CD8-positive, alpha-beta T cell (primary cell): ENCODE measurements at regions of chr11 and their contacts with region 1.

Region 1: DNA sequence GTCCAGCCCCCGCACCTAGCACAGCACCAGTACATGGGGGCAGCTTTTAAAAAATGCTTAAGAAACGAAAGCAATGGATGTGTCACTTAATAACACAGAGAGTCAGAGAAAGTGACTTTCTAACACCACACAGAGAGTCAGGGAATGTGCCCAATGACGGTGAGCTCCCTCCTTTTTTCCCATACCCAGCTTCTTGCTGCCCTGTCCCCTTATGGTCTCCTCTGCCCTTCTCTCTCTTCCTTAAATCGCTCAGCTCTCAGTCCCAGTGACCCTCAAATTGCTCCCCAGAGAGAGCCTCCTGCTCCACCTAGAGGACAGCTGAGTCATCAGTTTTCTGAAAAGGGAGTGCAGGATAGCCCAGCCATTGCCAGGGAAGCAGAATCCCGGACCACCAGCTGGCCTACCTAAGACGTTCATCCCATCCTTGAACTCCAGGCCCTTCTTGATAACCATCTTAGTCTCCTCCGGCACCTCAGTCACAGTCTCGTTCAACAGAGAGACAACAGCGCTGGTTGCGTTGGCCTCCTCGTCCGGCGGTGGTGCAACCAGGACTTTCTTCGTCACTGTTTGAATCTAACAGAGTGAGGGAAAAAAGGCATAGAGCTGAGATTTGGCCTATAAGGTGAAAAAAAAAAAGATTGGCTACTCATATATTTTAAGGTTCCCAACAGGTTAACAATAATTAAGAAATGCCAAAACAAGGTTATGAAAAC is 113.5 kb downstream of the SLC1A2 start:
- DNase-seq: peak; percentile 18 to 76 (median 53)
- ATAC-seq: peak; percentile 73
- H3K4me3 ChIP-seq: peak overlapping the region; percentile 12 to 39
- H3K4me3 Mint-ChIP-seq: peak overlapping the region; percentile 79
- H3K27ac ChIP-seq: peak overlapping the region in 1 of 2 experiments; percentile 29
- H3K27ac Mint-ChIP-seq: peak overlapping the region; percentile 92
- H3K4me1 ChIP-seq: peaks cover 18% of the 10 kb centered on the region
- H3K4me1 Mint-ChIP-seq: peaks cover 16% of the 10 kb centered on the region
- H3K27me3 ChIP-seq: no peaks in the 10 kb centered on the region
- H3K27me3 Mint-ChIP-seq: no peaks in the 10 kb centered on the region
- CTCF ChIP-seq: peak; percentile 63

Region 2: DNA sequence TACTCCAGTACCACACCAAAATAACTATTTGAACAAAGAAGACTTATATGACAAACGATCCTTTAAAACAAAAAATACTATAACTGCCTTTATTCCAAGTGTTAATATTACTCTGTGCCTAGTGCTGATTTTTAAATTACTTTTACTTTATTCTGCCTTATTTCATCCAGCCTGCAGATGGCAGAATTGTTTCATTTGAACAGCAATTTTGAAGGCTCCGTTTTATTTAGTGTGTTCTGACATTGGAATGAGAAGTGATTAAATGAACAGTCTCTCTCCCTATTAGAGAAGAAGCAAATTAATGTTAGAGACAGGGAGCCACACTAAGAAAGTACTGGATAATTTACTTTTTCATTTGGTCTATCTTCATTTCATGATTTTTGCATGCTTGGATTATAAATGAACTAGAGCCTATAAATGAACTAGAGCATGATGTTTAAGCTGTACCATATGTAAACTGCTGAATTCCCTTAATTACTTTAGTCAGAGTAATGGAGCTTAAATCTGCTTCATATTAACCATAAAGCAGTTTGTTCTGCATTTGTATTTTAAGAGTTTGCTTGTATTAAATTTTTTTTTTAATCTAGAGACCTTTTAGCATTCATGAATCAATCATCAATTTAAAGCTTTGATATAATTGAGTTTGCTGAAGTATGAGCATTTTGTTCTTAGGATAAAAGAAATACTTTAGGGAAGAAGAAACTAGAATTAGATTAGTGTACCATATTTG is 379.6 kb before region 1 on chr11:
- CTCF ChIA-PET with region 1: interaction called, 86 read pairs
- POLR2A ChIA-PET with region 1: interaction called, 3 read pairs
- intact Hi-C with region 1: loop called (anchors 1 to 2 kb)
- DNase-seq: peak in 3 of 9 experiments; percentile 12 to 73 (median 63)
- ATAC-seq: peak; percentile 71
- H3K4me3 ChIP-seq: no peak overlapping the region
- H3K4me3 Mint-ChIP-seq: no peak overlapping the region
- H3K27ac ChIP-seq: no peak overlapping the region
- H3K27ac Mint-ChIP-seq: no peak overlapping the region
- H3K4me1 ChIP-seq: peaks cover 3% of the 10 kb centered on the region
- H3K4me1 Mint-ChIP-seq: peaks cover 29% of the 10 kb centered on the region
- H3K27me3 ChIP-seq: no peaks in the 10 kb centered on the region
- H3K27me3 Mint-ChIP-seq: no peaks in the 10 kb centered on the region
- CTCF ChIP-seq: peak; percentile 96

Region 3: GRCh38 chr11:35138943-35139721 is 166.7 kb before region 1 on chr11 and contains the start of gene CD44:
- CTCF ChIA-PET with region 1: interaction called, 24 read pairs
- POLR2A ChIA-PET with region 1: interaction called, 3 read pairs
- intact Hi-C with region 1: loop called in 1 of 2 experiments (anchors 5 kb)
- DNase-seq: peak; percentile 67 to 93 (median 85)
- ATAC-seq: peak; percentile 83
- H3K4me3 ChIP-seq: peak within 1 kb of the TSS; percentile 80 to 97
- H3K4me3 Mint-ChIP-seq: peak within 1 kb of the TSS; percentile 90
- H3K27ac ChIP-seq: peak within 1 kb of the TSS; percentile 82 to 98
- H3K27ac Mint-ChIP-seq: peak within 1 kb of the TSS; percentile 98
- H3K4me1 ChIP-seq: peaks cover 35% of the 10 kb centered on the region
- H3K4me1 Mint-ChIP-seq: peaks cover 47% of the 10 kb centered on the region
- H3K27me3 ChIP-seq: no peaks in the 10 kb centered on the region
- H3K27me3 Mint-ChIP-seq: no peaks in the 10 kb centered on the region
- CTCF ChIP-seq: no peak
- total RNA-seq, gene CD44: 1,070 to 1,104 TPM

Region 4: GRCh38 chr11:35182317-35182939 is 123.4 kb before region 1 on chr11:
- CTCF ChIA-PET with region 1: interaction called, 19 read pairs
- POLR2A ChIA-PET with region 1: interaction called, 4 read pairs
- intact Hi-C with region 1: loop called in 1 of 2 experiments (anchors 5 kb)
- DNase-seq: peak in 1 of 9 experiments; percentile 24
- ATAC-seq: no peak
- H3K4me3 ChIP-seq: no peak overlapping the region
- H3K4me3 Mint-ChIP-seq: peak overlapping the region; percentile 24
- H3K27ac ChIP-seq: peak overlapping the region in 1 of 2 experiments; percentile 9
- H3K27ac Mint-ChIP-seq: peak overlapping the region; percentile 89
- H3K4me1 ChIP-seq: peaks cover 80% of the 10 kb centered on the region
- H3K4me1 Mint-ChIP-seq: peaks cover 86% of the 10 kb centered on the region
- H3K27me3 ChIP-seq: no peaks in the 10 kb centered on the region
- H3K27me3 Mint-ChIP-seq: no peaks in the 10 kb centered on the region
- CTCF ChIP-seq: no peak

Region 5: GRCh38 chr11:35227576-35228327 is 78.1 kb before region 1 on chr11:
- CTCF ChIA-PET with region 1: interaction called, 5 read pairs
- POLR2A ChIA-PET with region 1: no interaction called
- intact Hi-C with region 1: loop called in 1 of 2 experiments (anchors 5 kb)
- DNase-seq: no peak
- ATAC-seq: no peak
- H3K4me3 ChIP-seq: no peak overlapping the region
- H3K4me3 Mint-ChIP-seq: no peak overlapping the region
- H3K27ac ChIP-seq: peak overlapping the region in 1 of 2 experiments; percentile 9
- H3K27ac Mint-ChIP-seq: peak overlapping the region; percentile 62
- H3K4me1 ChIP-seq: no peaks in the 10 kb centered on the region
- H3K4me1 Mint-ChIP-seq: peaks cover 23% of the 10 kb centered on the region
- H3K27me3 ChIP-seq: no peaks in the 10 kb centered on the region
- H3K27me3 Mint-ChIP-seq: no peaks in the 10 kb centered on the region
- CTCF ChIP-seq: no peak

Region 6: GRCh38 chr11:35288817-35289541 is 16.8 kb before region 1 on chr11:
- CTCF ChIA-PET with region 1: interaction called, 13 read pairs
- POLR2A ChIA-PET with region 1: no interaction called
- intact Hi-C with region 1: no loop called
- DNase-seq: no peak
- ATAC-seq: no peak
- H3K4me3 ChIP-seq: no peak overlapping the region
- H3K4me3 Mint-ChIP-seq: no peak overlapping the region
- H3K27ac ChIP-seq: no peak overlapping the region
- H3K27ac Mint-ChIP-seq: no peak overlapping the region
- H3K4me1 ChIP-seq: no peaks in the 10 kb centered on the region
- H3K4me1 Mint-ChIP-seq: peaks cover 5% of the 10 kb centered on the region
- H3K27me3 ChIP-seq: peaks cover 0 to 4% of the 10 kb centered on the region in 2 experiments
- H3K27me3 Mint-ChIP-seq: no peaks in the 10 kb centered on the region
- CTCF ChIP-seq: no peak

Region 7: GRCh38 chr11:35334385-35335090 is 28.7 kb after region 1 on chr11:
- CTCF ChIA-PET with region 1: interaction called, 23 read pairs
- POLR2A ChIA-PET with region 1: interaction called, 4 read pairs
- intact Hi-C with region 1: no loop called
- DNase-seq: peak in 4 of 9 experiments; percentile 25 to 76 (median 63)
- ATAC-seq: peak; percentile 45
- H3K4me3 ChIP-seq: no peak overlapping the region
- H3K4me3 Mint-ChIP-seq: no peak overlapping the region
- H3K27ac ChIP-seq: no peak overlapping the region
- H3K27ac Mint-ChIP-seq: peak overlapping the region; percentile 89
- H3K4me1 ChIP-seq: peaks cover 28% of the 10 kb centered on the region
- H3K4me1 Mint-ChIP-seq: peaks cover 47% of the 10 kb centered on the region
- H3K27me3 ChIP-seq: no peaks in the 10 kb centered on the region
- H3K27me3 Mint-ChIP-seq: no peaks in the 10 kb centered on the region
- CTCF ChIP-seq: no peak

Region 8: GRCh38 chr11:35862666-35863065 is 556.8 kb after region 1 on chr11:
- CTCF ChIA-PET with region 1: no interaction called
- POLR2A ChIA-PET with region 1: no interaction called
- intact Hi-C with region 1: no loop called
- DNase-seq: no peak
- ATAC-seq: no peak
- H3K4me3 ChIP-seq: no peak overlapping the region
- H3K4me3 Mint-ChIP-seq: no peak overlapping the region
- H3K27ac ChIP-seq: no peak overlapping the region
- H3K27ac Mint-ChIP-seq: no peak overlapping the region
- H3K4me1 ChIP-seq: no peaks in the 10 kb centered on the region
- H3K4me1 Mint-ChIP-seq: no peaks in the 10 kb centered on the region
- H3K27me3 ChIP-seq: no peaks in the 10 kb centered on the region
- H3K27me3 Mint-ChIP-seq: peaks cover 10% of the 10 kb centered on the region
- CTCF ChIP-seq: no peak